Panc1 (cell line): ENCODE measurements at regions of chr10 and their contacts with region 1.

Region 1: DNA sequence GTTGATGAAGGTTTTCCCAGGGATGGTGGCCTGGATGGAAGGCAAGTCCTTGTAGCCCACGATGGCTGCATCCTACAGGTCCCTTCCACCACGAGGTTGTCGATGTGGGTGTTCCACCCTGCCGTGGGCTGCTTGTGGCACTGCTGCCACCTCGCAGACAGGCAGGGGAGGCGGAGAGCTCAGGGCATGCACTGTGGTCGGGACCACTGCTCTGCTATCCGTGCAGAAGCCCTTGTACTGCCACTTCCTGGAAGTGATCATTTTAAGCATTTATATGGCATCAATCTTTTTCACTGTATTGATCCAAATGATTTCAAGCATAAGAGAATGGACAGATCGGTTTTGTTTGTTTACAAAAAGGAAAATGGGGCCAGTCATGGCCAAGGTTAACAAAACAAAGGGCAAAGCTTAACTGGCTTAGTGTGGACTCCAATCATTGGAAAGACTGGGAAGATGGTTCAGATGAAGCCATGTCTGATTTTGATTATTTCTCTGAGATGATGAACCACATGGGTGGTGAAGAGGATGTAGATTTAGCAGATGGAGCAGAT is 8.2 kb upstream of the CYP17A1 start:
- DNase-seq: no peak
- ATAC-seq: no peak
- H3K4me3 ChIP-seq: no peak overlapping the region
- H3K27ac ChIP-seq: no peak overlapping the region
- H3K4me1 ChIP-seq: no peaks in the 10 kb centered on the region
- H3K27me3 ChIP-seq: no peaks in the 10 kb centered on the region
- CTCF ChIP-seq: no peak

Region 2: GRCh38 chr10:102869258-102870198 is 24.1 kb after region 1 on chr10 and contains the start of gene AS3MT:
- CTCF ChIA-PET with region 1: no interaction called
- POLR2A ChIA-PET with region 1: interaction called, 10 read pairs
- in situ Hi-C with region 1: no loop called
- intact Hi-C with region 1: no loop called
- DNase-seq: no peak
- ATAC-seq: peak; percentile 96
- H3K4me3 ChIP-seq: peak within 1 kb of the TSS; percentile 55 to 68
- H3K27ac ChIP-seq: peak within 1 kb of the TSS; percentile 65
- H3K4me1 ChIP-seq: peaks cover 3% of the 10 kb centered on the region; the same call in 1 of the 2 replicates
- H3K27me3 ChIP-seq: no peaks in the 10 kb centered on the region
- CTCF ChIP-seq: no peak
- total RNA-seq, gene AS3MT: 4.0 TPM

Region 3: GRCh38 chr10:102962951-102963755 is 117.7 kb after region 1 on chr10:
- CTCF ChIA-PET with region 1: no interaction called
- POLR2A ChIA-PET with region 1: no interaction called
- in situ Hi-C with region 1: no loop called
- intact Hi-C with region 1: no loop called
- DNase-seq: no peak
- ATAC-seq: no peak
- H3K4me3 ChIP-seq: no peak overlapping the region
- H3K27ac ChIP-seq: no peak overlapping the region
- H3K4me1 ChIP-seq: peaks cover 6% of the 10 kb centered on the region
- H3K27me3 ChIP-seq: no peaks in the 10 kb centered on the region
- CTCF ChIP-seq: no peak